ENCODE measurements at regions of chr3 and their contacts with region 1.

Region 1: GRCh38 chr3:177150970-177151627 is 46.2 kb downstream of the TBL1XR1 start:
- DNase-seq: no peak
- ATAC-seq: peak; percentile 30
- H3K4me3 Mint-ChIP-seq: peak overlapping the region; percentile 11
- H3K27ac Mint-ChIP-seq: peak overlapping the region; percentile 74
- H3K4me1 Mint-ChIP-seq: peaks cover 77% of the 10 kb centered on the region
- H3K27me3 Mint-ChIP-seq: no peaks in the 10 kb centered on the region
- CTCF ChIP-seq: no peak

Region 2: DNA sequence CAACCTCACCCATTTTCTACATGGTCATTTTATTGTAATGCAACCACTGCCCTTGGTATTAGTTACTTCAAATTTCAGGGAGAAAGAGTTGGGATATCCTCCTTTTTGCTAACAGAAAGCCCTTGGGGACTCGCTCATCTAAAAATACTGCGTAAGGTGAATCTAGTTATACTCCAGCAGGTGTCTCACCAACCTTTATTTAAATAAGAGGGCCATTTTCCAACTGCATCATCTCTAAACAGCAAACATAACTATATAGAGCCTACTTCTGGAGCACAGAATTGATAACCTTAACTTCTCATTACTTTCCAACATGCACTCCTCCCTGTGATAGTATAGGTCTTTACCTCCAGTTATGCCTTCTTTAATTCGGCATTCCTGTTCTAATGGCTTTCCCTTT is 31.3 kb before region 1 on chr3:
- CTCF ChIA-PET with region 1: no interaction called
- POLR2A ChIA-PET with region 1: no interaction called
- intact Hi-C with region 1: no loop called
- DNase-seq: no peak
- ATAC-seq: no peak
- H3K4me3 Mint-ChIP-seq: no peak overlapping the region
- H3K27ac Mint-ChIP-seq: no peak overlapping the region
- H3K4me1 Mint-ChIP-seq: peaks cover 82% of the 10 kb centered on the region
- H3K27me3 Mint-ChIP-seq: no peaks in the 10 kb centered on the region
- CTCF ChIP-seq: no peak

Region 3: GRCh38 chr3:177135844-177136492 is 15.1 kb before region 1 on chr3:
- CTCF ChIA-PET with region 1: no interaction called
- POLR2A ChIA-PET with region 1: no interaction called
- intact Hi-C with region 1: loop called (anchors 2 kb)
- DNase-seq: no peak
- ATAC-seq: no peak
- H3K4me3 Mint-ChIP-seq: no peak overlapping the region
- H3K27ac Mint-ChIP-seq: no peak overlapping the region
- H3K4me1 Mint-ChIP-seq: peaks cover 82% of the 10 kb centered on the region
- H3K27me3 Mint-ChIP-seq: no peaks in the 10 kb centered on the region
- CTCF ChIP-seq: no peak

Region 4: DNA sequence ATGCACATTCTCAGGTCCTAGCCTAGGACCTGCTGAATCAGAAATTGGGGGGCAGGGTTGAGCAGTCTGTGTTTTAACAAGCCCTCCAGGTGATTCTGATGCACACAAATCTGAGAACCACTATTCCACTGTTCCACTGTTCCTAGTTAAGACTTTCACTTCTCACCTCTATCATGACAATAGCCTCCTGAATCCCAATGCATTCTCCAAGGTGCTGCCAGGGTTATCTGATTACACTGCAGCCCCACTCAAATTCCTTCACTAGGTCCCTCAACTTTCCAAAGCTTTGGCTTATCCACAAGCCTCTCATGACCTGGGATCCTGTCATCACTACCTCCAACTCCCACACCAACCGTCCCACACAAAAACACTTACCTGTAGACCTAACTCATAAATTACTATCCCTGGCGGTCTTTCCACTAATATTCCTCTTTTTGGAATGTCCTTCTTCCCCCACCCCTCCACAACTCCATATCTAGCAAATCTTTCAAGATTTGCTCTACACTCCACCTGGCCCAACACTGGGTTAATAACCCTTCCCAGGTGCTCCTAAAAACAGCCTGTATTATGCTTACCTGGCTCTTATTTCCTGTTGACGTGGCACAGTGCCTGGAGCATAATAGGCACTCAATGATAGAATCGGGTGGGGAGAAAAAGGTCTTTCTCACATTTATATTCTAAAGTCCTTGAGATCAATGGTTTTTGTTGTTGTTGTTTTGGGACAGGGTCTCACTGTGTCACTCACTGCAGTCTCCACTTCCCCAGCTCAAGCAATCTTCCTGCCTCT is 19.0 kb after region 1 on chr3:
- CTCF ChIA-PET with region 1: no interaction called
- POLR2A ChIA-PET with region 1: interaction called, 3 read pairs
- intact Hi-C with region 1: loop called (anchors 2 kb)
- DNase-seq: no peak
- ATAC-seq: no peak
- H3K4me3 Mint-ChIP-seq: no peak overlapping the region
- H3K27ac Mint-ChIP-seq: peak overlapping the region; percentile 1
- H3K4me1 Mint-ChIP-seq: peaks cover 75% of the 10 kb centered on the region
- H3K27me3 Mint-ChIP-seq: no peaks in the 10 kb centered on the region
- CTCF ChIP-seq: no peak

Measured in activated B cell treated with CpG ODN at 0.5 μM for 24 hours (primary cell).